Activated B cell treated with CpG ODN at 0.5 μM for 24 hours (primary cell): ENCODE measurements at regions of chr11 and their contacts with region 1.

Region 1: DNA sequence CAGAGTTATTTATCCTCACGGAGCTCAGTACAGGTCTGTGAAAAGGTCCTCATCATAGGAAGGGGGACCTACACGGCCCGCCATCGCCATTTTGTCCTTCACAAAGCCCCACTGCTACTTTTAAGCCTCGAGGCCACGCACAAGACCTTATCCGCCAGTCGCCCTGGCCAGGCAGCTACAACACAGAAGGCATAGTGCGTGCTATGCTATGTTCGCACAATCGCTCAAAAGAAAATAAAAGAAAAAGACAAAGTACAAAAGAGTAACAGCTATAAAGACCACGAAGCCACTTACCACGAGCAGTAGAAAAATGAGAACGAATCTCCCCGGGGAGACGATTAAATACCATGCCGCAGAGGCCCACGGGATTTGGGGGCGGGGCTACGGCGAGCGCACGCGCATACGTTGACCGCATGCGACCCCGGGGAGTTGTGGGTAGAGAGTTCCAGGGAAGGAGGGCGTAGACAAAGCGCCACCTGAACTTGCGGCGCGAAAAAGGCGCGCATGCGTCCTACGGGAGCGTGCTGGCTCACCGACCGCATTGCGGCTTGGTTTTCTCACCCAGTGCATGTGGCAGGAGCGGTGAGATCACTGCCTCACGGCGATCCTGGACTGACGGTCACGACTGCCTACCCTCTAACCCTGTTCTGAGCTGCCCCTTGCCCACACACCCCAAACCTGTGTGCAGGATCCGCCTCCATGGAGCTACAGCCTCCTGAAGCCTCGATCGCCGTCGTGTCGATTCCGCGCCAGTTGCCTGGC is 16.4 kb upstream of the WDR74 start:
- DNase-seq: peak; percentile 99
- ATAC-seq: peak; percentile 89
- H3K4me3 Mint-ChIP-seq: peak overlapping the region; percentile 99
- H3K27ac Mint-ChIP-seq: peak overlapping the region; percentile 96
- H3K4me1 Mint-ChIP-seq: peaks cover 61% of the 10 kb centered on the region
- H3K27me3 Mint-ChIP-seq: no peaks in the 10 kb centered on the region
- CTCF ChIP-seq: no peak

Region 2: DNA sequence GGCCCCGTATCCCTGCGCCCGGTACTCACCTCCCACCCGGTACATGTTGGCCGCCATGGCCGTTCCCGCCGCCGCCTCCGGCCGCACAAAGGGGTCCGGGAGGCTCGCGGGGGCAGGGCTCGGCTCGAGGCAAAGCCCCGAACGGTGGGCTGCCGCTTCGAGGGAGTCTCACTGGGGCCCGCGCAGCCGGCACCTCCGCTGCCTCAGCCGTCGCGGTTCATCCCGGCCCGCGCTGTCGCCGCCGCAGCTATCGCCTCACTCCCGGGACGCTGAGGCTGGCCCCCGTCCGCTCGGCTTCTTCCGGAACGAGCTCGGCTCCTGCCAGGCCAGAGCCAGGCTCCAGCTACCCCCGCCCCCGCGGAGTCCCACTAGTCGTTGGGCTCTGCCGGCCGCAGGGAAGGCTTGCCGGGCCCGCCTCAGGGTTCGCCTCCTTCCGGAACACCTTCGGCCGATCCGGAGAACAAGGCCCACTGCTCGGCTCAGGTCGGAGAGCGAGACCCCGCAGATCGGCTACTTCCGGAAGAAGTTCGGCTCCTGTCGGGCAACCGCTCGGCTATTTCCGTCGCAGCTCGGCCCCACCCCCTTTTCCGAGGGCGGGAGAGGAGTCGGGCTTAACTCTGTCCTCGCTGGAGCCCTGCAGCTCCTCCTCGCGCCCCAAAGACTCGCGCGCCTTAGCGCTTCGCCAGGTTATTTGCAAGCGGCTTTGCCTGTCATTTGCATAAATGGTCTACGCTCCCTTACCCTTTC is 254.2 kb before region 1 on chr11 and contains the start of gene MTA2:
- CTCF ChIA-PET with region 1: no interaction called
- POLR2A ChIA-PET with region 1: interaction called, 12 read pairs
- intact Hi-C with region 1: no loop called
- DNase-seq: peak; percentile 100
- ATAC-seq: peak; percentile 81
- H3K4me3 Mint-ChIP-seq: peak within 1 kb of the TSS; percentile 92
- H3K27ac Mint-ChIP-seq: peak within 1 kb of the TSS; percentile 97
- H3K4me1 Mint-ChIP-seq: peaks cover 45% of the 10 kb centered on the region
- H3K27me3 Mint-ChIP-seq: no peaks in the 10 kb centered on the region
- CTCF ChIP-seq: no peak
- total RNA-seq, gene MTA2: 170 and 175 TPM in 2 replicates

Region 3: GRCh38 chr11:62652161-62653006 is 203.4 kb before region 1 on chr11:
- CTCF ChIA-PET with region 1: no interaction called
- POLR2A ChIA-PET with region 1: interaction called, 17 read pairs
- intact Hi-C with region 1: no loop called
- DNase-seq: no peak
- ATAC-seq: no peak
- H3K4me3 Mint-ChIP-seq: peak overlapping the region; percentile 90
- H3K27ac Mint-ChIP-seq: peak overlapping the region; percentile 90
- H3K4me1 Mint-ChIP-seq: peaks cover 28% of the 10 kb centered on the region
- H3K27me3 Mint-ChIP-seq: no peaks in the 10 kb centered on the region
- CTCF ChIP-seq: no peak

Region 4: GRCh38 chr11:62787005-62787759 is 68.6 kb before region 1 on chr11 and contains the start of gene TMEM179B:
- CTCF ChIA-PET with region 1: interaction called, 66 read pairs
- POLR2A ChIA-PET with region 1: interaction called, 93 read pairs
- intact Hi-C with region 1: loop called (anchors 1 kb)
- DNase-seq: peak; percentile 87
- ATAC-seq: peak; percentile 71
- H3K4me3 Mint-ChIP-seq: peak within 1 kb of the TSS; percentile 92
- H3K27ac Mint-ChIP-seq: peak within 1 kb of the TSS; percentile 89
- H3K4me1 Mint-ChIP-seq: peaks cover 42% of the 10 kb centered on the region
- H3K27me3 Mint-ChIP-seq: no peaks in the 10 kb centered on the region
- CTCF ChIP-seq: peak; percentile 66
- total RNA-seq, gene TMEM179B: 34.9 and 47.7 TPM in 2 replicates

Region 5: DNA sequence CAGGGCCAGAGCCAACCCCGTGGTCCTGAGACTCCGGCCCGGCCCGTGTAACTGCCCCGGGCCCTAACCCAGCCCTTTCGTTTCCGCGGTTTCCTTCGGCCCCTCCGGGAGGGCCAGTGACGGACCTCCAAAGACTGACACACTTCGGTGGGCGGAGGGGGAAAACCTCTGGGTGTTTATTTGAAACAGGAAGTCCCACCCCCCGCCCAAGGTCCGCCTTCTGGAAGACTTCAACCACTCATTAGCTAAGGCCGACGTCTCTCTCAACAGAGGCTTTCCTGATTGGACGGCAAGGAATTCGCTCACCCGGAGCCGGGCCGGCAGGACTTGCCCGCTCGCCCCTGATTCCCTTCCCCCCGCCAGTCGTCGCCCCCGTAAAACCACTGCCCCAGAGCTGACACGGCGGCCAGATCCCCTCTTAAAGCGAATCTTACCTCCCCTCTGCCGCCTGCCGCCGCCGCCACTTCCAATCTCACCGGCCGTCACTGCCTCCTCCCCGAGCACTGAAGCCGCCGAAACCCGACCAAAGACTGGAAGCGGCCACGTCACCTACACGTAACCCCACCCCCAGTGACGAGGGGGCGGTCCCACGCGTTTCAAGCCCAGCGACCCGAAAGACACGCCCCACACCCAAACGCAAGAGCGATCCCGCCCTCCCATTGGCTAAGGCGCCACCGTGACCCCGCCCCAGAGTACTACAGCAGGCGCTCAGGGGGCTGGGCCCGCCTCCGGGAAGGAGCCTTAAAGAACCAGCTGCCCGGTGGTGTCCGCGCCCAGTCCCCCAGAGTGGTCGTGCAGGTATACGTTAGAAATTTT is 24.0 kb before region 1 on chr11 and contains the start of gene STX5:
- CTCF ChIA-PET with region 1: no interaction called
- POLR2A ChIA-PET with region 1: interaction called, 33 read pairs
- intact Hi-C with region 1: loop called (anchors 1 kb)
- DNase-seq: peak; percentile 98
- ATAC-seq: peak; percentile 91
- H3K4me3 Mint-ChIP-seq: peak within 1 kb of the TSS; percentile 100
- H3K27ac Mint-ChIP-seq: peak within 1 kb of the TSS; percentile 100
- H3K4me1 Mint-ChIP-seq: peaks cover 47% of the 10 kb centered on the region
- H3K27me3 Mint-ChIP-seq: no peaks in the 10 kb centered on the region
- CTCF ChIP-seq: no peak
- total RNA-seq, gene STX5: 58.4 and 71.5 TPM in 2 replicates

Region 6: GRCh38 chr11:63567044-63567840 is 711.5 kb after region 1 on chr11:
- CTCF ChIA-PET with region 1: no interaction called
- POLR2A ChIA-PET with region 1: no interaction called
- intact Hi-C with region 1: no loop called
- DNase-seq: peak; percentile 44
- ATAC-seq: peak; percentile 79
- H3K4me3 Mint-ChIP-seq: peak overlapping the region; percentile 78
- H3K27ac Mint-ChIP-seq: peak overlapping the region; percentile 96
- H3K4me1 Mint-ChIP-seq: peaks cover 58% of the 10 kb centered on the region
- H3K27me3 Mint-ChIP-seq: peaks cover 5% of the 10 kb centered on the region
- CTCF ChIP-seq: no peak

Region 7: GRCh38 chr11:64538501-64539294 is 1682.9 kb after region 1 on chr11:
- CTCF ChIA-PET with region 1: no interaction called
- POLR2A ChIA-PET with region 1: no interaction called
- intact Hi-C with region 1: no loop called
- DNase-seq: no peak
- ATAC-seq: no peak
- H3K4me3 Mint-ChIP-seq: no peak overlapping the region
- H3K27ac Mint-ChIP-seq: no peak overlapping the region
- H3K4me1 Mint-ChIP-seq: peaks cover 7% of the 10 kb centered on the region
- H3K27me3 Mint-ChIP-seq: peaks cover 44% of the 10 kb centered on the region
- CTCF ChIP-seq: no peak